ENCODE measurements at regions of chr7 and their contacts with region 1.

Region 1: GRCh38 chr7:77657427-77658224 is 38.6 kb upstream of the RSBN1L start:
- DNase-seq: peak; percentile 24
- H3K4me3 ChIP-seq: no peak overlapping the region
- H3K27ac ChIP-seq: no peak overlapping the region
- H3K4me1 ChIP-seq: no peaks in the 10 kb centered on the region
- H3K27me3 ChIP-seq: no peaks in the 10 kb centered on the region
- CTCF ChIP-seq: peak; percentile 38 to 57

Region 2: GRCh38 chr7:77674878-77675277 is 17.3 kb after region 1 on chr7:
- CTCF ChIA-PET with region 1: no interaction called
- dilution Hi-C with region 1: no loop called
- in situ Hi-C with region 1: no loop called
- intact Hi-C with region 1: loop called (anchors 1 kb)
- DNase-seq: peak; percentile 92
- H3K4me3 ChIP-seq: no peak overlapping the region
- H3K27ac ChIP-seq: peak overlapping the region; percentile 67
- H3K4me1 ChIP-seq: peaks cover 10% of the 10 kb centered on the region
- H3K27me3 ChIP-seq: no peaks in the 10 kb centered on the region
- CTCF ChIP-seq: no peak

Measured in mammary epithelial cell (primary cell).